CD4-positive, alpha-beta memory T cell (primary cell): ENCODE measurements at regions of chr4 and their contacts with region 1.

Region 1: DNA sequence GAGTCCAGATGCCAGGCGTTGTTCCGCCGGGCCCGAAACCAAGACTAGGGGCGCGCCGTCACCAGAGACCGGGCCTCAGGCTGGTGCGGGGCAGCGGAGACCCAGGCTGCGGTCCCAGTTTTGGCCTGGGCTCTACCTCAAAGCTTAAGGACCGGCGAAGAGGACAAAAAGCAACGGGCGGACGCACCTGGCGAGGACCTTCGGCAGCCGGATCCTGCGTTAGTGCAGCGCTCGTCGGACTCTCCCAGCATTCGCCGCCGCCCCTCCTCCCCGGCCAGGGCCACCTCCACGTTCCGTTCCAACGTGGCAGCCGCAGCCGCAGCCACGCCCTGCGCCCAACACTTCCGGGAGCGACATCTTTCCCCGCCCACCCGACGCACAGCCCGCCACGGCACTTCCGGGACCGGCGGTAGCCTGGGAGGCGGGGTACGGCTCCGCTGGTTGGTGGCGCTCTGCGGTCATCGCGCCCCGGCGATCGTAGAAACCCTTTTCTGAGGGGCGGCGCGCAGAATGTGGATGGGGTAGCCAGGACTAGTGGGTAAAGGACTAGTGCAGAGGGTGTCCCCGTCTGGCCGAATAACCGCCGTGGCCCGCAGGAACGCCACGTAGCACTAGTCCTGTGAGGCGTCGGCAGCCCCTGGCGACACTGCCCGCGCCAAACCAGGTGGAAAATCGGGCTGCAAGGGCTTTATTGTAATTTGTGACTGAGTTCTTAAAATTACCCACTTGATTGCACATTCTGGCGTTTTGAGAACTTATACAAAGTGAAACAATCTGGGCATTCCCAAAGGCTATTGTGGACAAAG is at the start of gene SEC31A:
- DNase-seq: peak; percentile 95 to 96 (median 96)
- H3K4me3 ChIP-seq: peak within 1 kb of the TSS; percentile 66 to 91
- H3K4me3 Mint-ChIP-seq: peak within 1 kb of the TSS; percentile 89 to 96 (median 94)
- H3K27ac ChIP-seq: peak within 1 kb of the TSS; percentile 99
- H3K27ac Mint-ChIP-seq: peak within 1 kb of the TSS; percentile 95 to 99 (median 98)
- H3K4me1 ChIP-seq: peaks cover 32% of the 10 kb centered on the region
- H3K4me1 Mint-ChIP-seq: peaks cover 22 to 51% (median 32%) of the 10 kb centered on the region in 4 donors
- H3K27me3 ChIP-seq: no peaks in the 10 kb centered on the region
- H3K27me3 Mint-ChIP-seq: no peaks in the 10 kb centered on the region
- total RNA-seq, gene SEC31A: 157 to 167 TPM

Region 2: GRCh38 chr4:81494031-81494431 is 1397.1 kb before region 1 on chr4:
- CTCF ChIA-PET with region 1: no interaction called
- POLR2A ChIA-PET with region 1: no interaction called
- intact Hi-C with region 1: loop called (anchors 10 kb)
- DNase-seq: peak in 2 of 5 donors; percentile 30 to 45
- H3K4me3 ChIP-seq: no peak overlapping the region
- H3K4me3 Mint-ChIP-seq: peak overlapping the region; percentile 73 to 88 (median 80)
- H3K27ac ChIP-seq: peak overlapping the region; percentile 59
- H3K27ac Mint-ChIP-seq: peak overlapping the region; percentile 84 to 96 (median 95)
- H3K4me1 ChIP-seq: peaks cover 41% of the 10 kb centered on the region
- H3K4me1 Mint-ChIP-seq: peaks cover 26 to 49% (median 39%) of the 10 kb centered on the region in 4 donors
- H3K27me3 ChIP-seq: no peaks in the 10 kb centered on the region
- H3K27me3 Mint-ChIP-seq: no peaks in the 10 kb centered on the region

Region 3: GRCh38 chr4:82851885-82852750 is 39.0 kb before region 1 on chr4:
- CTCF ChIA-PET with region 1: interaction called, 11 read pairs
- POLR2A ChIA-PET with region 1: no interaction called
- intact Hi-C with region 1: no loop called
- DNase-seq: peak in 4 of 5 donors; percentile 21 to 40 (median 30)
- H3K4me3 ChIP-seq: no peak overlapping the region
- H3K4me3 Mint-ChIP-seq: no peak overlapping the region
- H3K27ac ChIP-seq: no peak overlapping the region
- H3K27ac Mint-ChIP-seq: peak overlapping the region in 4 of 7 donors; percentile 60 to 75 (median 62)
- H3K4me1 ChIP-seq: no peaks in the 10 kb centered on the region
- H3K4me1 Mint-ChIP-seq: peaks cover 0 to 3% (median 0%) of the 10 kb centered on the region in 4 donors
- H3K27me3 ChIP-seq: no peaks in the 10 kb centered on the region
- H3K27me3 Mint-ChIP-seq: no peaks in the 10 kb centered on the region

Region 4: DNA sequence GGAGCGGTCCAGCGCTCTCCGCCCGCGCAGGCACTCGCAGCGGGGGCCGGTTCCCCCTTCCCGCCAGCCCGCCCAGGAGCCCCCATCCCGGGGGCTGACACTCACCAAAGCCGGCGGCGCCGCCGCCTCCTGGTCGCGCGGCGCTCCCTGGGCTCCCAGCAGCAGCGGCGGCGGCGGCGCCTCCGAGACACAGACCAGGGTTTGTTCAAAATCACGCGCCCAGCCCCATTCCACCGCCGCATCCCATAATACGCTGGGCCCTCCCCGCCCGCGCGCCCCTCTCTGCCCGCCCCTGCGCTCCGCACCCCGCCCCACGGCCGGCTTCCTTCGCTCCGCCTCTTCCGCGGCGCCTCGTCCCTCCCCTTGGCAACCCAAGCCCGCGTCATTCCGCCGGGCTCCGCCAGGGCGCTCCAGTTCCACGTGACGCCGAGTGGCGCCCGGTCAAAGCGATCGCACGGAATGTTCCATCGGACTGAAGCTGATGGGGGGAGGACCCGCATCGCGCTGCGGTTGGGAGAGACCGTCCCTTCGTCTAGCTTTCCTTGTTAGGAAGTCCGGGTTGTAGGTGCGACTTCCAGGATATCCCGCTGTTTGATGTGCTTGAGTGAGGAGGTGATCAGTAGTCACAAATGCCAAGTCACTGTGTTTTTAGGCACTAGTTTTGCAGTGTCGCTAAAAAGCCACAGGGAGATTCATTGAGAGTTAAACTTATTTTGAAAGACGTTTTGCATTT is 121.7 kb after region 1 on chr4:
- CTCF ChIA-PET with region 1: interaction called, 3 read pairs
- POLR2A ChIA-PET with region 1: interaction called, 6 read pairs
- intact Hi-C with region 1: loop called (anchors 1 kb)
- DNase-seq: peak; percentile 96 to 99 (median 97)
- H3K4me3 ChIP-seq: peak overlapping the region; percentile 88 to 98
- H3K4me3 Mint-ChIP-seq: peak overlapping the region; percentile 91 to 97 (median 95)
- H3K27ac ChIP-seq: peak overlapping the region; percentile 89
- H3K27ac Mint-ChIP-seq: peak overlapping the region; percentile 87 to 97 (median 94)
- H3K4me1 ChIP-seq: peaks cover 43% of the 10 kb centered on the region
- H3K4me1 Mint-ChIP-seq: peaks cover 33 to 52% (median 39%) of the 10 kb centered on the region in 4 donors
- H3K27me3 ChIP-seq: no peaks in the 10 kb centered on the region
- H3K27me3 Mint-ChIP-seq: no peaks in the 10 kb centered on the region

Region 5: GRCh38 chr4:83034630-83035494 is 143.8 kb after region 1 on chr4 and contains the start of gene COPS4:
- CTCF ChIA-PET with region 1: interaction called, 4 read pairs
- POLR2A ChIA-PET with region 1: interaction called, 5 read pairs
- intact Hi-C with region 1: loop called (anchors 1 kb)
- DNase-seq: peak; percentile 93 to 99 (median 98)
- H3K4me3 ChIP-seq: peak within 1 kb of the TSS; percentile 76 to 84
- H3K4me3 Mint-ChIP-seq: peak within 1 kb of the TSS; percentile 98 to 100 (median 100)
- H3K27ac ChIP-seq: peak within 1 kb of the TSS; percentile 85
- H3K27ac Mint-ChIP-seq: peak within 1 kb of the TSS; percentile 94 to 100 (median 99)
- H3K4me1 ChIP-seq: peaks cover 25% of the 10 kb centered on the region
- H3K4me1 Mint-ChIP-seq: peaks cover 15 to 41% (median 25%) of the 10 kb centered on the region in 4 donors
- H3K27me3 ChIP-seq: no peaks in the 10 kb centered on the region
- H3K27me3 Mint-ChIP-seq: no peaks in the 10 kb centered on the region
- total RNA-seq, gene COPS4: 24.6 to 26.1 TPM

Region 6: DNA sequence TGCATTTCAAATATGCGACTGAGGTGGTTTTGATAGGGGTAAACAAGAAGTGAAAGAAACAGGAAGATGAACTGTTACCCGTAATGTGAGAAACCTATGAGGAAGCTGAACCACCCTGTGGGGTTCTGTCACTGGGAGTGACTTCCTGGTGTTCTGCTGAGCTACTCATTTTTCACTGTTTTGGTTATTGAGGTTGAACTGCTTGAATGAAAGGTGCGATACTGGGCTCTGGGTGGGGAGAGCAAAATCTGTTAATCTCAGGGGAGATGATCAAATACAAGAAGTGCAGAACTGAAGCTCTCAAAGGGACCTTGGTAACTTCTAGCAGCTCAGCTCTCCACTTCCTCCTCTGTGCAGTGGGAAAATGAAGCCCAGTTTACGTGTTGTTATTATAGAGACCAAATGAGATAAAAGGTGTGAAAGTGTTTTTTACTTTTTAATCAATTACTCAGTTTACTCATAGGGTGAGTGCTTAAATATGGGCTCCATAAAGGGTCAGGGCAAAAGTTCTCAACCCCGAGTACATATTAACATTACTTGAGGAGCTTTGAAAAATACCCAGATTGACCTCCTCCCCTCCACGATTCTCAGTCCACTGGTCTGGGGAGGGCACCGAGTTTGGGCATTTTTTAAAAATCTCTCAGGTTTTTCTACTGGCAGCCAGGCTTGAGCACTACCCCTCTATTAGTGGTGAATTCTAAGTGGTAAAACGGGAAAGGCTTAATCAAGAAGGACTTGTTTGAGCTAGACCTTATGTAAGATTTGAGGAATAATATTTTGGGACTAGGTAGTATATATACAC is 326.8 kb after region 1 on chr4:
- CTCF ChIA-PET with region 1: no interaction called
- POLR2A ChIA-PET with region 1: no interaction called
- intact Hi-C with region 1: loop called (anchors 5 kb)
- DNase-seq: peak; percentile 82 to 91 (median 86)
- H3K4me3 ChIP-seq: peak overlapping the region in 1 of 2 donors; percentile 9
- H3K4me3 Mint-ChIP-seq: peak overlapping the region; percentile 55 to 77 (median 70)
- H3K27ac ChIP-seq: peak overlapping the region; percentile 64
- H3K27ac Mint-ChIP-seq: peak overlapping the region; percentile 77 to 94 (median 91)
- H3K4me1 ChIP-seq: peaks cover 85% of the 10 kb centered on the region
- H3K4me1 Mint-ChIP-seq: peaks cover 58 to 85% (median 71%) of the 10 kb centered on the region in 4 donors
- H3K27me3 ChIP-seq: no peaks in the 10 kb centered on the region
- H3K27me3 Mint-ChIP-seq: no peaks in the 10 kb centered on the region

Region 7: DNA sequence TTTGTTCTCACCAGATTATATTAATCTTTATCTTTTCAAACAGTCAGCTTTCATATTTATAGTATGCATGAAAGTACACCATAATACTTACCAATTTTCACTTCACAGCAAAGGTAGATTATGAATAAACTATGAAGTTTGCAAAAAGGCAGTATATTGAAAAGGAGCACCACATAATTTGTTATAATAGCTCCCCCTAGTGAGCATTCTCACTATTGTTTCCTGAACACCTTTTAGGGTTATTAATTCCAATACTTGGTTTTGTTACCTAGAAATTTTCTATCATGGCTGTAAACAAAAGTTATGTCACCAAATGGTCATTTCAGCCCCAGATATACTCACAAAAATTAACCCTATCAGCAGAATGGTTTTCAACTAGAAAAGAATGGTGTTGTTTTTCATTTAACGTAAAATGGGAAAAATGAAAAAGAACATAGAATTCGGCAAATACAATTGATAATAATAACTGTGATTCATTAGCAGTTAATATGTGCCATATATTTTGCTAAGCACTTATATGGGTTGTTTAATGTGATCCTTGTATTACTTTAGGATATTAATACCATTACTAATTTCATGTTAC is 1638.2 kb after region 1 on chr4:
- CTCF ChIA-PET with region 1: no interaction called
- POLR2A ChIA-PET with region 1: no interaction called
- intact Hi-C with region 1: no loop called
- DNase-seq: peak in 4 of 5 donors; percentile 12 to 27 (median 22)
- H3K4me3 ChIP-seq: no peak overlapping the region
- H3K4me3 Mint-ChIP-seq: no peak overlapping the region
- H3K27ac ChIP-seq: no peak overlapping the region
- H3K27ac Mint-ChIP-seq: no peak overlapping the region
- H3K4me1 ChIP-seq: no peaks in the 10 kb centered on the region
- H3K4me1 Mint-ChIP-seq: no peaks in the 10 kb centered on the region
- H3K27me3 ChIP-seq: no peaks in the 10 kb centered on the region
- H3K27me3 Mint-ChIP-seq: peaks cover 9 to 18% of the 10 kb centered on the region in 2 donors